GM10248 (cell line): ENCODE measurements at regions of chr6 and their contacts with region 1.

Region 1: DNA sequence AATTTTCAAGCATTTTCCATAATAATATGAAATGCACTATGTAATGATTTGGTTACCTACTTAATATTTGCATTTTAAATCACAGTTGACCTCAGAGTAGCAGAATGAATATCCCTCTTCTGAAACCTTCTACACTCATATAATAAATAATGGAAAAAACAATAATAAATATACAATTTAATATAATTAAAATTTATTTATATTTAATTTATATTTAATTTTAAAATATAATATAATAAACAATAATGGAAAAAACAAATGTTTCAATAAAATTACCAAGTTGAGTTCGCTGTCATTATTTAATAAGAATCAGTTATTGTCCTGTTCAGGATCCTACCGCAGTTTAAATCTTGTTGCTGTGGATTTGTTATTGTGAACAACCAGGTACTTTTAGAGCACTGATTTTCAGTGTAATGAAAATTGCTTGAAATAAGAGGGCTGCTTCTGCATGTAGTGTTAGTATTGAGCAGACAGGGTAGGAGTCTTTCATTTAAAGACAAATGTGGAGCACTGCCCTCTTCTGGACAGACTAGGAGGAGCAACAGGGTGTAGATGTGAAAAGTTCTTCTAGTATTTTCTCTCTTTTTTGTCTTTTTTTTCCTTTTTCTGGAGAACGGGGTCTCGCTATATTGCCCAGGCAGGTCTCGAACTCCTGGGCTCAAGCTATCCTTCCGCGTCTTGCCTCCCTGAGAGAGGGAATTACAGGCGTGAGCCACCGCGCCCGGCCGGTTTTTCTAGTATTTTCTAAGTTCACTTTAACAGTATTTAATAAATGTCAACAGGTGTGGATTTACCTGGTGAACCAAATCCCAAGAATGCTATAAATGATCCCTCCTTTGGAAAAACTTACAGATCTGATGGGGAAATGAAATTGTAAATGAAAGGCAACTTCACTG is 13.6 kb downstream of the TRAPPC3L start:
- DNase-seq: peak; percentile 58
- CTCF ChIP-seq: peak; percentile 76

Region 2: DNA sequence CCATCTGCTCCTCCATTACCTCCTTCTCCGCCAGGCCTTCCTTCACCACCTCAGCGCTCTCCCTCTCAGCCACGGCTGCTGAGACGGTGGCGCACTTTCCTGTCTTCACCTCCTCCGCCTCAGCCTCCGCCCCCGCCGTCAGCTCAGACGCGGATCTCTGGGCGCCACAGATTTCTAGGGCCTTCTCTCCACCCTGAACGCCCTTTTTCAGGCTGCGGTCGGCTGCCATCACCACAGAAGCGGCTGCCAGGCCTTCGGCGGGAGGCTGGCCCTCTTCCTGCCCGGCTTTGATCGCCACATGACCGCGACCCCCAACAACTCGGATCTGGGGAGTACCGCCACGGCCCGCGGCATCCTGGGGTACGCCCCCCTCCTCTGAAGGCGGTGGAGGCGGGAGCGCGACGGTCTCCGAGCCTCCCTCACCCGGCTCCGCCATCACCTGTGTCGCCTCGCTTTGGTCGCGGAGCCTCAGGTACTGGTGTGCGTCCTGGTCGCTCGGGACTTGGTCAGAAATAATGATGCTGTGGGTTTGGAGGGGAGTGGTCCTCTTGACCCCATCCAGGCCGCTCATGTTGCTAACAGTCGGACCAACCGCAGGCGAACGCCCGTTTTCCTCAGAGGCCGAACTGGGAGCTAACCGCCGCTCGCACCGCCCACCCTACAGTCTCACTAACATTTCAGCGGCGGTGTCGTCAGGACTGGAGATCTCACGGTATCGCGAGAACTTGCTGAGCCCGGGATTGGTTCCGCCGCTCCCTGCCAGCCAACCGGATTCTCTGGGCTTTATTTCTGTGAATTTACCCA is 252.5 kb before region 1 on chr6 and contains the start of gene TSPYL1:
- CTCF ChIA-PET with region 1: interaction called, 15 read pairs
- POLR2A ChIA-PET with region 1: no interaction called
- DNase-seq: peak; percentile 93
- CTCF ChIP-seq: peak; percentile 21

Region 3: GRCh38 chr6:116542426-116542825 is 10.5 kb after region 1 on chr6:
- CTCF ChIA-PET with region 1: interaction called, 10 read pairs
- POLR2A ChIA-PET with region 1: no interaction called
- DNase-seq: no peak
- CTCF ChIP-seq: no peak

Region 4: GRCh38 chr6:116556065-116556464 is 24.1 kb after region 1 on chr6:
- CTCF ChIA-PET with region 1: interaction called, 32 read pairs
- POLR2A ChIA-PET with region 1: no interaction called
- DNase-seq: no peak
- CTCF ChIP-seq: no peak

Region 5: GRCh38 chr6:117233145-117233544 is 701.2 kb after region 1 on chr6:
- CTCF ChIA-PET with region 1: no interaction called
- POLR2A ChIA-PET with region 1: no interaction called
- DNase-seq: no peak
- CTCF ChIP-seq: no peak